ENCODE measurements at regions of chr9 and their contacts with region 1.

Region 1: DNA sequence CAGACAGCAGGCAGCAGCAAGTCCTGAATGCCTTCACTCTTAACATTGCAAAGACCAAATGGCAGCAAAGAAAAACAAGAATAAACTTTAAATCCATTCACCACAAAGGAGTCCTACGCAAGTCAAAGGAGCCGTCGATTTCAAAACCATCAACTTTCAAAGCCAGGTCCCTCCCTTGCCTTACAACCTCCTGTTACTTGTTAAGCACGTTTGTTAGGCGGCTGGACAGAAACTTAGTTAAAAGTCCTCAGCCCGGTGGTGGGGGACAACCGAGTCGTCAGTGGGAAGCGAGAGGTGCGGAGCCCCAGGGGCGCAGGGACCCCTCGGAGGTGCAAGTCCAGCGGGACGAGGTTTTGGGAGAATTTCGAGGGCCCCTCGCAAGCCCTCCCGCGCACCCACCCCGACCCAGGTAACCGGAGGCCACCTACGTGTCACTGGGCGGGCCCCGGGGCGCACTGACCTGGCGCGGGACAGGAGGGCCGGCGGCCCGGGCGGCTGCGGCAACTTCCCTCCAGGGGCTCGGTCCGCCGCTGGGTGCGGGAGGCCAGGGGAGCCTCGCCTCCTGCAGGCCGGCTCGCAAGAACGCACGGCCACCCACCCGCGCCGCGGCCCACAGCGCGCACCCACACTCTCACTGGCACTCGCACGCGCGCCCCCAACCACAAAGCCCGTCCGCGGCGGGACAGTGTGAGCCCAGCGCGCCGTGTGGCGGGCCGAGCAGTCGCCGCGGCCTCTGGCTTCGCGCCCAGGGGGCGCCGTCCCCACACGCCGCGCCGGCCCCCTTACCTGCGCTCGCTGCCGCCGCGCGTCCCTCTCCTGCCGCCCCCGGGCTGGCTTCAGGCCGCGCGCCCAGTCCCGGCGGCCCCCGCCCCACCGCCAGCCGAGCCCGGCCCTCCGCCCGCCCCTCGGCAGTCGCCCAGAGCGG is 627 bp downstream of the LPAR1 start:
- DNase-seq: no peak
- ATAC-seq: peak; percentile 76
- H3K4me3 ChIP-seq: peak overlapping the region; percentile 55 to 73
- H3K27ac ChIP-seq: peak overlapping the region; percentile 73
- H3K4me1 ChIP-seq: peaks cover 8% of the 10 kb centered on the region
- H3K27me3 ChIP-seq: no peaks in the 10 kb centered on the region
- CTCF ChIP-seq: peak; percentile 51

Region 2: DNA sequence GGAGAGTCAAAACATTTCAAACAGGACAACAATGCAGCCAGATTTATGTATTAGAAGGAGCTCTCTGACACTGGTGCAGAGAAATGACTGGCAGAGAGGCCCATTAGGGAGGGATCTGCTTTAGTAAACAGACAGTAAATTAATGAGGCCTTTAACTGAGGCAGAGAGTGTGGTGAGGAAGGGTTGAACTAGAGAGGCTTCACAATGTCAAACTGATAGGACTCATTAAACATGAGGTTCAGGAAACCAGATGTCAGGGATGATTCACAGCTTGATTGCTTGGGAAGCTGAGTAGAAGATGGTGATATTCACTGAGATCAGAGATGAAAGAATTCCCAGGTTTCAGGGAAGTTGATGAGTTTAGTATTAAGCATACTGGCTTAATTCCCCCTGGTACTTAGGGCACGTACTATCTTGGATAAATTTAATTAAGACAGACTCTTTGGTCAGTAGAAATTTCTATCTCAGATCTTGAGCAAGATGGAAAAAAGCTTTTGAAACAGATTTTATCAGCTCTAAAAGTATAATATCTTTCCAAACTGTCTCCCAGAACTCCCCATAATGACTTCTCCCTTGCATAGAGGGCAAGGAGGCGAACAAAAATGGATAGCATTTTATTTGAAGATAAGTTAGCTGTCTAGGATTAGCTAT is 377.6 kb before region 1 on chr9:
- CTCF ChIA-PET with region 1: no interaction called
- POLR2A ChIA-PET with region 1: no interaction called
- in situ Hi-C with region 1: no loop called
- intact Hi-C with region 1: no loop called
- DNase-seq: no peak
- ATAC-seq: no peak
- H3K4me3 ChIP-seq: no peak overlapping the region
- H3K27ac ChIP-seq: no peak overlapping the region
- H3K4me1 ChIP-seq: no peaks in the 10 kb centered on the region
- H3K27me3 ChIP-seq: no peaks in the 10 kb centered on the region
- CTCF ChIP-seq: no peak

Region 3: GRCh38 chr9:111298731-111299598 is 261.3 kb after region 1 on chr9:
- CTCF ChIA-PET with region 1: no interaction called
- POLR2A ChIA-PET with region 1: no interaction called
- in situ Hi-C with region 1: no loop called
- intact Hi-C with region 1: loop called (anchors 5 kb)
- DNase-seq: peak; percentile 35
- ATAC-seq: peak; percentile 84
- H3K4me3 ChIP-seq: no peak overlapping the region
- H3K27ac ChIP-seq: peak overlapping the region; percentile 17; the same call in 1 of the 2 replicates
- H3K4me1 ChIP-seq: peaks cover 6% of the 10 kb centered on the region; the same call in 1 of the 2 replicates
- H3K27me3 ChIP-seq: no peaks in the 10 kb centered on the region
- CTCF ChIP-seq: peak; percentile 62; the same call in 1 of the 2 replicates